Posterior vena cava (tissue), 2 donors: ENCODE measurements at regions of chr2 and their contacts with region 1.

Region 1: DNA sequence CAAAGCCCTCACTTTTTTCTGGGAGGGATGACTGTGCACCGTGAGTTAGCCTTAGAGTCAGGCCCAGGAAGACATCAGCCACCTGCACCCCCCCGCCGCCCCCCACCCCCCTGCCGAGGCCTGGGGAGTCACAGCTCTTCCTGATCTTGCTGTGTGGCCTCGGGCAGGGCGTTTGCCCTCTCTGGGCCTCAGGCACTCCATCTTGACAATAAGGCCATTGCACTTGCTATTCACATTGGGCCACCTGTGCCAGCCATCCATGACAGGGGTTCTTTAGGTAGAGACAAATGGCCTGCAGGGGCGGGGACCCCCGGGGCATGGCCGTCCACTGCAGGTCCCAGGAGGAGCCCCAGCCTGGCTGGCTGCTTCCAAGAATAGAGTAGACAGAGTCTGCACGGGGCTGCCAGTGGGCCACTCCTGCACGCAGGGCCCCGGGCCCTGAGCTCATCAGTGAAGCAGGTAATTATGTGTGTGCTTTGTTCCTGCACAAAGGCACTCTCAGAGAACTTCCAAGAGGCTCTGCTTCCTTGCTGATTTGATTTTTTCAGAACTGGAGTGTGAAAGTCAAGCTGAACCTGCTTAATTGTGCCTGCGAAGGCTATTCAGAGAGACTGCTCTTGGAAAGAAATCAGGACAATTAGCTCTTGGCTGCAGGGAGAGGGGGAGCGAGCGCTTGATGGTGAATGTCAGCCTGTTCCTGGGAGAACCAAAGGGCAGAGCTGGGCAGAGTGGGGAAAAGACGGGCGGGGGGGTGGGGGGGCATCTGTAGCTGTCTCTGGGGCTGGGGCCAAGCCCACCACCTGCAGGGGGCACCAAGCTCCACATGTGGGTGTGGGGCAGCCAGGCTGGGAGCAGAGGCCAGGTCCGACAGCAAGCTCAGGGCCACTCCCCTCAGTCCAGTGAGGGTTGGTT is 40.3 kb downstream of the RRM2 start:
- DNase-seq: no peak

Region 2: GRCh38 chr2:10141736-10142642 is 20.9 kb before region 1 on chr2:
- intact Hi-C with region 1: no loop called
- DNase-seq: peak; percentile 47

Region 3: DNA sequence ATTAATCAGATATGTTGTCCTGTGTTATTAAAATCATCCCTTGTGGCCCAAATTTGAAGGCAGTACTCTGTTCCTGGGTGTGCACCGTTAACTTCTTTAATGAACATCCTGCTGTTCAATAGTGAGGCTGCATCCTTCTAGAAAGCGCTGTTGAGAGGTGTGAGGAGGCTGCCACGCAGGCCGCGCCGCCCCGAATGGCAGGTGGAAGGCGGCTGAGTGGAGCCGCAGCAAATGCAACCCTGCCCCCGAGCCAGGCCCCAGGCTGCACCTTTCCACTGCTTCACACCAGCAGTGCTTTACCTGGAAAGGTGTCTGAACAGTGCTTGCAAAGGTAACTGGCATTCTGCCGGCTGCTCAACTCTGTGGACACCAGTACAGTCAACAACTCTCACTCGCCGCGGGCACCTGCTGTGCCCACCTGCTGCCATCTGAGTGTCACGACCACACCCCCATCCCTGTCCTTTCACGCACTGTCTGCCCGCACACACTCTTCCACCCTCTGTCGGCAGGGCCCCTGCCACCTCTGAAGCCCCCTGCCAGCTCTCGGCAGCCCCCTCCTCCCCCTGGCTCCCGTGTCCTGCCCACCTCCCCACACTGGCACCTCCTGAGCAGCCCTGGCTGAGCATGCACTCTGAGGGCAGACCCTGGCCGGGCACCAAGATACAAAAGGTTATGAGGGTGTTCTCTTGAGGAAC is 214.4 kb after region 1 on chr2:
- intact Hi-C with region 1: loop called in 1 of 2 experiments (anchors 1 kb)
- DNase-seq: no peak

Region 4: GRCh38 chr2:11631462-11631861 is 1468.6 kb after region 1 on chr2:
- intact Hi-C with region 1: loop called in 1 of 2 experiments (anchors 5 kb)
- DNase-seq: peak; percentile 78